HEK293 (cell line): ENCODE measurements at regions of chr12 and their contacts with region 1.

Region 1: GRCh38 chr12:69630191-69630590 is 19.5 kb upstream of the LRRC10 start:
- H3K4me3 ChIP-seq: no peak overlapping the region
- H3K27ac ChIP-seq: no peak overlapping the region
- H3K4me1 ChIP-seq: no peaks in the 10 kb centered on the region
- CTCF ChIP-seq: no peak

Region 2: GRCh38 chr12:69648481-69648880 is 18.3 kb after region 1 on chr12:
- CTCF ChIA-PET with region 1: interaction called, 12 read pairs
- POLR2A ChIA-PET with region 1: no interaction called
- H3K4me3 ChIP-seq: no peak overlapping the region
- H3K27ac ChIP-seq: no peak overlapping the region
- H3K4me1 ChIP-seq: no peaks in the 10 kb centered on the region
- CTCF ChIP-seq: no peak